GM10248 (cell line): ENCODE measurements at regions of chr6 and their contacts with region 1.

Region 1: DNA sequence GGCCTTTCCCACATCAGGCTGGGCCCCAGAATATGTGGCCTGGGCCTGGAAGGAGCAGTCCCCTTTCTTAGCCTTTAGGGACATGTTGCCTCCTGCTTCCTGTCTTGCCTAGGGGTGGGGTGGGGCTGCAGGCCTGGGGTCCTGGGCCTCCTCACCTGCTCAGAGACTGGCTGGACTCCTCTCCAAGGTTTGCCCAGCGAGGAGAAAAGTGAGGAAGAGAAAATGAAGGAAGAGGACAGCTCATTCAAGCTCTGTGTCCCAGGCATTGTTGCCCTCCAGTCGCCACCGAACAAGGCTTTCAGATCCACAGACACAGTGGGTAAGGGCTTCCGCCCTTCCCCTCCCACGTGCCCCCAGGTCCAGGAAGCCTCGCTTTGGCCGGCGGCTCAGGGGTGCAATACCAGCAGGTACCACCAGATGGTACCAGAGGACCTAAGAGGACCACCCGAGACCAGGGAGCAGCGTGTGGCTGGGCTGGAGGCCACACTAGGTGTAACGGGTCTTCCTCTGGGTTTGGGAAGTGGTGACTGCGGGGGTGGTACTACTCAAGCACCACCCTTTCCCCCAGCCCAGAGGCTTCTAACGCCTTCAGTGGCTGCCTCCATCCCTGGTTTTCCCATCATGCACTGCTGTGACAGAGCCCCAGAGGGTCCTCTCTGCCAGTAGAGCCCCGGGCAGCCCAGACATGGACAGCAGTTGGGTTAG is 5.5 kb upstream of the BAK1 start:
- DNase-seq: peak; percentile 87
- CTCF ChIP-seq: peak; percentile 99

Region 2: DNA sequence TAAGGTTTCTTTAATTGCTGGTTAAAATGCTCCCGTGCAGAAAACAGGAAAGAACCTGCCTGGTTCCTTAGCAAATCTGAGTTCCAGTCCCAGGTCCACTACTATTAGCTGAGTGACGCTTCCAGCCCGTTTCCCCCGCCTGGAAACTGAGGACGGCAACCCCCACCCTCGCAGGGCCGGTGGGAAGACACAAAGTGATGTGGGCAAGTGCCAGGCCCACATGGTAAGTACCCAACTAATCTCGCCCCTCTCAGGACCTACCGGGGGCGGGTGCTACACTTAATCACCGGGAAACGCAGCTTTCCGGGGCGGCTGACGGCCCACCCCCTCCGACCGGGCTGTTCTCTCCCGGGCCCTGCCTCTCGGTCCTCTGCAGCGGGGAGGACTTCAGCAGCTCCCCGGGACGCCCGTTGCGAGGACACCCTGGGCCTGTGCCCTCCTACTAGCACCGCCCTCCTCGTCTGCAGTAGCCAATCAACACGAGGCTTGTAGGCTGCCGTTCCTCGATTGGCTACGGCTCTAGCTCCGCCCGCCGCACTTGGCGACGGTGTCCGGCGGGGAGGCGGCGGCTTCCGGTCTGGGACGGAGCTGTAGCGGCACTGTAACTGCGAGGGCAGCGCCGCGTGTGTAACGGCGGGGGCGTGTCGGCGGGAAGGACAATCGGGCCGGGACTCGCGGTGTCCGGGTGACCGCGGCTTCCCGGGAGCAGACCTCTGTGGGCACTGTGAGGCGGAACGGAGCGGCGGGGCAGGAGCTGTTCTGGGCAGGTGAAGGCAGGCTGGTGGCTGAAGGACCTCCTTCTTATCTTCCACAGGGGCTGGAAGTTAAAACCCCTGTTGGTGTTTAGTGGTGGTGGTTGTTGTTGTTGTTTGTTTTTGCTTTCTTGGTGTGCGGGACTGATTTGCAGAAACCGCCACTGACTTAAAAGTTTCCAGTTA is 131.3 kb before region 1 on chr6 and contains the start of gene ZBTB9:
- CTCF ChIA-PET with region 1: no interaction called
- POLR2A ChIA-PET with region 1: no interaction called
- DNase-seq: peak; percentile 99
- CTCF ChIP-seq: no peak

Region 3: GRCh38 chr6:33570806-33571636 is 14.5 kb before region 1 on chr6:
- CTCF ChIA-PET with region 1: interaction called, 15 read pairs
- POLR2A ChIA-PET with region 1: no interaction called
- DNase-seq: peak; percentile 96
- CTCF ChIP-seq: peak; percentile 16

Region 4: DNA sequence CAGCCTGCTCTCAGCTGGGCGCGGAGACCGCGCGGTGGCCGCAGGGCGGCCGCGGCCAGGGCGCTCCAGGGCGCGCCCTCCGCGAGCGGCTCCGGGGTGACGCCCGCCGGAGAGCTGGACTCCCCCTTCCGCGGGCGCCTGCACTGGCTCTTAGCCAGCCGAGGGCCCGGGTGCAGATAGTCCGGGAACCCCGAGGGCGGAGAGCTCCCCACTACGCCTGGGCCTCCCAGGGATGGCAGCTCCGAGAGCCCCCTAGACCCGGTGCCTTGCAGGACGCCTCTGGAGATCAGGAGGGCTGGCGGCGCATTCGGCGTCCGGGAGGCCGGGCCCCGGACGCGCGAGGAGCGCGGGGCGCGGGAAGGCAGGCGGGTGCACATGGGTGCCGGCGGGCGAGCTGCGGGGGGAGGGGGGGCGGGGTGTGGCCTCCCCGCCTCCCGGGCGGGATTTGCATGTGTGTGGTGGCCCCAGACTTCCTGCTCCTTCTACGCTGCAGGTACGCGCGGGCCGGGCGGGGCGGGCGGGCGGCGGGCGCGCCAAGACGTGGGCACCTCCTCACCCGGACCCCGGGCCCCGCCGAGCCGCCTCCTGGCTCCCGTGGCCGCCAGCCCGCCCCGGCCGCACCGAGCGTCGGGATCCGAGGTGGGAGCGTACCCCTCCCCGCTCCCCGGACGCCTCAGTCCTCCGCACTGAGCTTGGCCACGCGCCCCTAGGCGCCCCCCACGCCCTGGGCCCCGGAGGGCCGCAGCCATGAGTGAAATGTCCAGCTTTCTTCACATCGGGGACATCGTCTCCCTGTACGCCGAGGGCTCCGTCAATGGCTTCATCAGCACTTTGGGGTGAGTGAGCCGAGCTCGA is 35.5 kb after region 1 on chr6 and contains the start of gene ITPR3:
- CTCF ChIA-PET with region 1: interaction called, 16 read pairs
- POLR2A ChIA-PET with region 1: no interaction called
- DNase-seq: peak; percentile 97
- CTCF ChIP-seq: no peak

Region 5: DNA sequence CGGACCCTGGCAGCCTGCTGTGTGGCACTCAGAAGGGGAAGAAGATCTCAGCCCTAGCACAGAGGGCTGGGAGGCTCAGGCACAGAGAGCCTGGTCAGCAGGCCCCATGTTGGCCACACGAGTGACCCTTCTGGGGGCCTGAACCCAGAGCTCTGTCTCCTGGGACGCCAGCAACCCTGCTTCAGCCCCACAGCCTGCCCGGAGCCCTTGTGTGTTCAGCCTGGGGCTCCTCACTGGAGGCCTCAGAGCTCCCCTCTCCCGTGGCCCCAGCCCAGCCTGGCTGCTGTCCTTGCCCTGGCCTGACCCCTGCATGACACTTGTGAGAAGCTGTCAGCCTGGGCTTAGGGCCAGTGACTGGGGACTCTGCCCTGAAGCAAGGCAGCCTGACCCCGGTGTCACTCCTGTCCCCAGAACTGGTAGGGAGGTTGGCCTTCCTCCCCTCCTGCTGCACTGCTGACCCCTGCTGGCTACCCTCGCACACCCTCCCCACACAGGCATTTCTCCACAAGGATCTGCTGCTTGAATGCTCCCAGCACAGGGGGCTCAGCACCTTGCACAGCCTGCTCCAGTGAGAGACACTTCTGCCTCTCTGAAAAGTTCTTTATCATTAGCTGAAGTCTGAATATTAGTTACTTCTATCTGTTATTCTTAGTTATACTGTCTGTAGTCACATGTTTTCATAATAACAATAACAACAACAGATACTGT is 176.5 kb after region 1 on chr6:
- CTCF ChIA-PET with region 1: interaction called, 25 read pairs
- POLR2A ChIA-PET with region 1: no interaction called
- DNase-seq: peak; percentile 64
- CTCF ChIP-seq: peak; percentile 62